GM12878 (cell line): ENCODE measurements at regions of chr20 and their contacts with region 1.

Region 1: GRCh38 chr20:50380641-50381040 is 129.5 kb upstream of the PTPN1 start:
- DNase-seq: no peak
- ATAC-seq: no peak
- H3K4me3 ChIP-seq: no peak overlapping the region
- H3K27ac ChIP-seq: no peak overlapping the region
- H3K4me1 ChIP-seq: peaks cover 10% of the 10 kb centered on the region
- H3K27me3 ChIP-seq: no peaks in the 10 kb centered on the region
- CTCF ChIP-seq: no peak
- EP300 ChIP-seq: no peak
- POLR2A ChIP-seq: no peak
- RAD21 ChIP-seq: no peak; the same call in 1 of the 2 replicates

Region 2: GRCh38 chr20:50286609-50287008 is 94.0 kb before region 1 on chr20:
- CTCF ChIA-PET with region 1: no interaction called
- POLR2A ChIA-PET with region 1: no interaction called
- RAD21 ChIA-PET with region 1: no interaction called
- SMC1A ChIA-PET with region 1: interaction called, 3 read pairs
- in situ Hi-C with region 1: no loop called
- intact Hi-C with region 1: loop called (anchors 10 kb)
- DNase-seq: no peak
- ATAC-seq: peak; percentile 63
- H3K4me3 ChIP-seq: peak overlapping the region; percentile 39
- H3K27ac ChIP-seq: peak overlapping the region; percentile 59
- H3K4me1 ChIP-seq: peaks cover 24% of the 10 kb centered on the region
- H3K27me3 ChIP-seq: no peaks in the 10 kb centered on the region
- CTCF ChIP-seq: no peak
- EP300 ChIP-seq: no peak
- POLR2A ChIP-seq: no peak
- RAD21 ChIP-seq: no peak

Region 3: GRCh38 chr20:50450881-50451752 is 70.5 kb after region 1 on chr20:
- CTCF ChIA-PET with region 1: no interaction called
- POLR2A ChIA-PET with region 1: no interaction called
- RAD21 ChIA-PET with region 1: no interaction called
- SMC1A ChIA-PET with region 1: no interaction called
- in situ Hi-C with region 1: no loop called
- intact Hi-C with region 1: loop called (anchors 5 kb)
- DNase-seq: peak; percentile 68
- ATAC-seq: peak; percentile 87
- H3K4me3 ChIP-seq: peak overlapping the region; percentile 57
- H3K27ac ChIP-seq: peak overlapping the region; percentile 11; the same call in 1 of the 2 replicates
- H3K4me1 ChIP-seq: peaks cover 21% of the 10 kb centered on the region
- H3K27me3 ChIP-seq: no peaks in the 10 kb centered on the region; a peak in 1 of 4 replicates
- CTCF ChIP-seq: no peak
- EP300 ChIP-seq: peak; percentile 90 to 91; a peak in 3 of 4 replicates
- POLR2A ChIP-seq: no peak
- RAD21 ChIP-seq: no peak